KBM-7 (cell line): ENCODE measurements at regions of chr11 and their contacts with region 1.

Region 1: DNA sequence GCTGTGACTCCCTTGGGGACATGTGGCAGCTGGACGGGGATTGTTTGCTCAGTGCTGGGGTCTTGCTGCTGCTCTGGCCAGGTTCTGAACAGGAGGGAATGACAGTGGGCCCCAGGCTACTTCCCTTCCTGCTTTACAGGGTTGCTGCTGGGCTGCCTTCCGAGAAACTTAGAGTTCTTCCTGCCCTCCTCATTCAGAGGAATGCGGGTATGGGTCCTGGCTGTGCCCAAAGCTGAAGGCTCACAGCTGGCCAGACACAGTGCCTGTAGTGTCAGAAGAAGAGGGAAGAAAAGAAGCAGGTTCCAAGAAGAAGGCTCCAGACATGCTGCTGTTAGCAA is 108.3 kb upstream of the PARVA start:
- DNase-seq: peak; percentile 52

Region 2: DNA sequence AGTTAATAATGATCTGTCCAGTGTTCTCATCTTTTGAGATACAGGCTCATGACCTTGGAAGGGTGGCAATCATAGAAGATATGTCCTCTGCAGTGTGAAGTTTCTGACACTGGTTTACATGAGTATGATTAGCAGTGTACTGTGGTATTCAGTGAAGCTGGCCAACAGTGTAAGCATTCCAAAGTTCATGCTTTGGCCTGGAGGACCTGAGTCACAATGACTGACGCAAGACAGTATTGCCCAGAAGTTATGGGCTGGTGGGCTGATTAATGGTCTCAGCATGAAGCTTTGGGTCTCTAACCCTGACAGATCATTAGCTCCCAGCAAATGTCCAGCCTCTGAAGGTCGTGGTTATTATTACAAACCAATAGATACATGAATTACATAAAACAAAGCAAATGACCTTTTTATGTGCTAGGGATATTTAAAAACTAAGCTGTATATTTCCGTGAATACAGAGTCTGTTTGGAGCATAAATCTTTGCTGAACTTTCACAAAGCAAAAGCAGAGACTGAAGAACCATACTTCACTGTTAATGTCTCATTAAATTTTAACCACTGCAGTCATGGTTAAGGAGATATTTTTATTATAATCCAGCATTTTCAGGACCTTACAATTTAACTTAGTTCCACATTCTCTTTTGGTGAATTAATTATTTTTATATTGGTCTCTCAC is 455.6 kb before region 1 on chr11:
- in situ Hi-C with region 1: loop called (anchors 25 kb)
- DNase-seq: no peak

Region 3: DNA sequence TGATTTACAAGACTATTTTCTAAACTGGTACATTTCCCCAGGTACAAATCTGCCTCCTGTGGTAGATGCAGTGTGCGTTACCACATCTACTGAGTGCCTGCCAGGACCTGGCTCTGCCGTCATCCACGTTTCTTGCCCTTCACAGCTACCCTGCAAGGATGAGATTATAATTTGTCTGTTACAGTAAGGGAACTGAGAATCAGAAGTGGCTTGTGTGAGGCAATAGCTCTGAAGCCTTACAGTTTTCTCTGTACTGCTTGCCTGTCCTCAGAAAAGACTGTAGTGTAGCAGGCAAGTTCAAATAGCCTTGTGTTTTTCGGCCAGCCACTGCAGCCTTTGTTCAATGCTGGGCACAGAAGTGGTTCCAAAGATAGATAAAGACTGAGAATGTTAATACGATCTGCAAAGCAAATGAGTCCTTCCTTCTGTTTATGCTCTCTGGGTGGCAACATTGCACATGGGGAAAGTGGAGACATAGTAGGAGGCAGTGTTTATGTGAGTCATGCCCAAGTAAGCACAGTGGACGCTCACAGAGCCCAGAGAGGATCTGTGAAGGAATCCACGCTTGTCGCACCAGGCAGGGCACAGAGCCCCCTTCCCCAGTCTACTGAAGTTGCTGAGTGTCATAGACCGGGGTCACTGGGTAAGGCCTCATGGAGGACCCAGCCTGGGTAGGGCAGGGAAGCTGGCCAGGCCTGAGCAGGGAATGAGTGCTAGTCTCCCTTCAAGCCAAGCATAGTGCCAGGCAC is 109.5 kb before region 1 on chr11:
- in situ Hi-C with region 1: no loop called
- DNase-seq: no peak

Region 4: GRCh38 chr11:12629601-12630313 is 360.7 kb after region 1 on chr11:
- in situ Hi-C with region 1: no loop called
- DNase-seq: no peak